HCT116 (cell line): ENCODE measurements at regions of chr5 and their contacts with region 1.

Region 1: GRCh38 chr5:154072414-154073171 is 33.8 kb downstream of the MFAP3 start:
- DNase-seq: peak; percentile 56
- ATAC-seq: peak; percentile 97
- H3K4me3 ChIP-seq: peak overlapping the region; percentile 9 to 22; a peak in 2 of 4 replicates
- H3K27ac ChIP-seq: no peak overlapping the region
- H3K4me1 ChIP-seq: peaks cover 0 to 8% of the 10 kb centered on the region in 2 experiments; a peak in 2 of 4 replicates
- H3K27me3 ChIP-seq: no peaks in the 10 kb centered on the region
- CTCF ChIP-seq: peak; percentile 87 to 97 (median 95)
- POLR2A ChIP-seq: no peak
- RAD21 ChIP-seq: peak; percentile 97

Region 2: DNA sequence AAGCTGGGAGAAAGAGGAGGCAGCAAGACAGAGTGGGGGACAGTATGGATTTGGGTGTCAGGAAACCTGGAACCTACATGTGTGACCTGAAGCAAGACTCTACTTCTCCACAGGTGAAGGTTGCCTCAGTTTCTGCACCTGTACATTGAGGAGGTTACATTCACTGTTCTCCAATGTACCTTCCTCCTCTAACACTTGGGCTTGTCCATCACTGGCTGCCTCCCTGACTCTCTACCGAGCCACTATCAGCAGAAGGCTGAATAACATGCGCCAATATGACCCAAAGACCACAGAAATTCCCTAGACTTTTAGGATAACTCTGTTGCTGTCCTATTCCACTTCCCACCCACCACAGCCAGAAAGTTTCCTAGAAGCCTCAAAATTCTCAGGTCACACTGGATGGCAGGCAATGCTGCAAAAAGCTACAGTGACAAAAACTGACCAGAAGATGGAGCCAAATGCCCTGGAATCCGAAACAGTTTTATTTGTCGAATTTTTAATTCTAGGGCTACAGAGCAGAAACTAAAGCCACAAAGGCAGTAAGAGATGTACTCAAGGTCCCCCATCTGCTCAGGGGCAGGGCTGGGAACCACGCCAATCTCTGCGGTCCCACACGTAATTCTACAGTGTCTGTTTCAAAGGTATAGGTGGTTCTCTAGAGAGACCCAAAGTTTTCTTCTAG is 98.3 kb before region 1 on chr5:
- CTCF ChIA-PET with region 1: interaction called, 31 read pairs
- POLR2A ChIA-PET with region 1: no interaction called
- RAD21 ChIA-PET with region 1: interaction called, 4 to 5 read pairs
- intact Hi-C with region 1: loop called (anchors 1 kb)
- DNase-seq: peak; percentile 18
- ATAC-seq: peak; percentile 86
- H3K4me3 ChIP-seq: no peak overlapping the region
- H3K27ac ChIP-seq: no peak overlapping the region
- H3K4me1 ChIP-seq: no peaks in the 10 kb centered on the region
- H3K27me3 ChIP-seq: 0 out of 2 replicates have a peak, but pooled peaks cover 3% of the 10 kb centered on the region
- CTCF ChIP-seq: peak; percentile 74 to 85 (median 85)
- POLR2A ChIP-seq: no peak
- RAD21 ChIP-seq: peak; percentile 94

Region 3: GRCh38 chr5:154092356-154093141 is 20.0 kb after region 1 on chr5:
- CTCF ChIA-PET with region 1: interaction called, 10 read pairs
- POLR2A ChIA-PET with region 1: no interaction called
- RAD21 ChIA-PET with region 1: no interaction called
- intact Hi-C with region 1: no loop called
- DNase-seq: no peak
- ATAC-seq: no peak
- H3K4me3 ChIP-seq: no peak overlapping the region
- H3K27ac ChIP-seq: no peak overlapping the region
- H3K4me1 ChIP-seq: no peaks in the 10 kb centered on the region
- H3K27me3 ChIP-seq: peaks cover 28% of the 10 kb centered on the region
- CTCF ChIP-seq: no peak
- POLR2A ChIP-seq: no peak
- RAD21 ChIP-seq: no peak

Region 4: DNA sequence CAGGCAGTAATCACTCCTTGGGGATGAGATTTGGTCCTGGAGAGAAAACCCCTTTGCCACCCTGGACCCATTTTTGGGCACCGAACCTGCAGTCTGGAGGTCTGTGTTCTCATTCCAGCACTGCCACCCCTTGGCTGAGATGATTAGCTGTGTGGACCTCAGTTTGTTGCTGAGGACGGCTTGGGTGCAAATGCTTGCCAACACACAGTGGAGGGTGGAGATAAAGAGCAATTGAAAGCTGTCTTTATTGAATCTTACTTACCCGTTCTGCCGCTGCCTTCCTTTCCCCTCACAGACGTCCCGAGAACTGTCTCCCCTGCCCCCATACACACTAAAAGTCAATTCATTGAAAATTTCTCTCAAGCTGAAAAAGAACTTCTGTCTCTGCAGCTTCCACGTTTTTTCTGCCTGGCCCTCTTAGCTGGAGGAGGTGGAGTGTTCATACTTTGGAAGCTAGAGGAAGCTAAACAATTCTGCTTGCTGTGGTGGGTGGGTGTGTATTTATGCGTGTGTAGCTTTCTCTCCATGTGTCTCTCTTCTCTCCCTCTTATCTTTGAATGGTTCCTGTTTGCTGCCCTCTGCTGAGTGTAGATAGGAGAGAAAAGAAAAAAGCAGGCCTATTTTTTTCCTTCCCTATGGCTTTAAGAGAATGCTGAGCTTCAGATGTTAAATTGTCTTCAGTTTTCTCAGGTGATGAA is 124.5 kb after region 1 on chr5:
- CTCF ChIA-PET with region 1: interaction called, 15 read pairs
- POLR2A ChIA-PET with region 1: no interaction called
- RAD21 ChIA-PET with region 1: interaction called in 1 of 2 experiments, 3 read pairs
- intact Hi-C with region 1: no loop called
- DNase-seq: no peak
- ATAC-seq: peak; percentile 46
- H3K4me3 ChIP-seq: no peak overlapping the region
- H3K27ac ChIP-seq: no peak overlapping the region
- H3K4me1 ChIP-seq: peaks cover 8 to 14% of the 10 kb centered on the region in 2 experiments; a peak in 3 of 4 replicates
- H3K27me3 ChIP-seq: no peaks in the 10 kb centered on the region
- CTCF ChIP-seq: peak; percentile 24 to 28 (median 27); a peak in 3 of 6 replicates
- POLR2A ChIP-seq: no peak
- RAD21 ChIP-seq: peak; percentile 40

Region 5: DNA sequence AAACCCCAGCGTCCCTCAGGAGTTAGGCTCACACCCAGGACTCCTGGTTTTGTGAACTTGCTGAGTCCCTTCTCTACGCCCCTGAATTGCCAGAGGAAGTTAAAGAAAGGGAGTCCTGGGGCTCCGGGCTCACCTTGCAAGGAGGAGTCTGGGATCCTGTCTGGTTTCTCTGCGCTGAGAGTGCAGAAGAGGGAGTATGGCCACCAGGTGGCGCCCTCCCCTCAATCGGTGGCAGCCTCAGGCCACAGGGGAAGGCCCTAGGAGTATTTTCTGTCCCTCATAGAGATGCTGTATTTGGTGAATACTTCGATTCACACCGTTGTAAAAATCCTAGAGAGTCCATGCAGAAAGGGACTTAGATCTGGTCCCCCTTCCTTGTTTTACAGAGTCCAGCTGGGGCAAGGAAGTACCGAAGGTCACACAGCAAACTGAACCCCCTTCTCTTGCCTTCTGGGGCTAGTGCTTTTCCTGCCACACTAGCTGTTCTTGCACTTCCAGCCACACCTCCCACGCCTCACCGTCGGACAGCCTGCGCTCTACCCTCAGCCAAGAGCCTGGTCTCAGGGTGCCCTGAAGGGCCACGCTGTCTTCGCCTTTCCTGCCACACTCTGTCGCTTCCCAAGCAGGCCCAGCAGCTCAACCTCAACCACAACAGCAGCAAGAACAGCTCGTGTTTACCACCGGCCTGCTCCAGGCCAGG is 395.2 kb after region 1 on chr5:
- CTCF ChIA-PET with region 1: interaction called, 11 read pairs
- POLR2A ChIA-PET with region 1: no interaction called
- RAD21 ChIA-PET with region 1: no interaction called
- intact Hi-C with region 1: loop called (anchors 2 kb)
- DNase-seq: peak; percentile 47
- ATAC-seq: peak; percentile 99
- H3K4me3 ChIP-seq: no peak overlapping the region
- H3K27ac ChIP-seq: no peak overlapping the region; the same call in 1 of the 2 replicates
- H3K4me1 ChIP-seq: peaks cover 4 to 5% of the 10 kb centered on the region in 2 experiments; a peak in 3 of 4 replicates
- H3K27me3 ChIP-seq: no peaks in the 10 kb centered on the region
- CTCF ChIP-seq: peak; percentile 85 to 93 (median 90)
- POLR2A ChIP-seq: no peak
- RAD21 ChIP-seq: peak; percentile 88

Region 6: GRCh38 chr5:154811653-154812365 is 739.2 kb after region 1 on chr5:
- CTCF ChIA-PET with region 1: no interaction called
- POLR2A ChIA-PET with region 1: no interaction called
- RAD21 ChIA-PET with region 1: no interaction called
- intact Hi-C with region 1: no loop called
- DNase-seq: peak; percentile 59
- ATAC-seq: peak; percentile 90
- H3K4me3 ChIP-seq: no peak overlapping the region
- H3K27ac ChIP-seq: no peak overlapping the region
- H3K4me1 ChIP-seq: no peaks in the 10 kb centered on the region
- H3K27me3 ChIP-seq: no peaks in the 10 kb centered on the region
- CTCF ChIP-seq: peak; percentile 72 to 95 (median 88); a peak in 5 of 6 replicates
- POLR2A ChIP-seq: no peak
- RAD21 ChIP-seq: peak; percentile 83